ENCODE measurements at regions of chr12 and their contacts with region 1.

Region 1: GRCh38 chr12:69157023-69157655 is 82.2 kb upstream of the CPSF6 start:
- DNase-seq: peak; percentile 92 to 95
- ATAC-seq: peak; percentile 89
- H3K4me3 ChIP-seq: no peak overlapping the region
- H3K27ac ChIP-seq: no peak overlapping the region
- H3K4me1 ChIP-seq: no peaks in the 10 kb centered on the region
- H3K27me3 ChIP-seq: no peaks in the 10 kb centered on the region

Region 2: GRCh38 chr12:68981516-68981915 is 175.6 kb before region 1 on chr12:
- intact Hi-C with region 1: no loop called
- DNase-seq: no peak
- ATAC-seq: no peak
- H3K4me3 ChIP-seq: no peak overlapping the region
- H3K27ac ChIP-seq: no peak overlapping the region
- H3K4me1 ChIP-seq: no peaks in the 10 kb centered on the region
- H3K27me3 ChIP-seq: no peaks in the 10 kb centered on the region

Region 3: DNA sequence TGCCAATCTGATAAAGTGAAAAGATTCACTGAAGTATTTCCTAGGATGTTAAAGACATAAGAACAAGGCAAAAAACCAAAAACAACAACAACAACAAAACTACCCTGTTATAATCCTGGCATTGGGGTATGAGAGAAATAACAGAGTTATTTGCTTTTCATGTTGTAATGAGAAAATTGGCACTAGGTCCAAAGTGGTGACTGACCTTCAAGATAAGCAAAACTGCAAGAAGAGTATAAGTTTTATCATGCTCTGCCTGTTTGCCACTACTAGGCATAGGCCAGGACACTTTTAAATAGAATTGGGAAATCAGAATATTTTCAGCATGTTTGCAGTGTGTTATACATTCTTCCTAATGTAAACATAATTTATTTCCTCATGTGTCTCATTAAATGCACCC is 84.1 kb before region 1 on chr12:
- intact Hi-C with region 1: no loop called
- DNase-seq: no peak
- ATAC-seq: no peak
- H3K4me3 ChIP-seq: no peak overlapping the region
- H3K27ac ChIP-seq: no peak overlapping the region
- H3K4me1 ChIP-seq: no peaks in the 10 kb centered on the region
- H3K27me3 ChIP-seq: no peaks in the 10 kb centered on the region

Region 4: GRCh38 chr12:69211160-69211559 is 54.0 kb after region 1 on chr12:
- intact Hi-C with region 1: no loop called
- DNase-seq: no peak
- ATAC-seq: no peak
- H3K4me3 ChIP-seq: no peak overlapping the region
- H3K27ac ChIP-seq: no peak overlapping the region
- H3K4me1 ChIP-seq: no peaks in the 10 kb centered on the region
- H3K27me3 ChIP-seq: no peaks in the 10 kb centered on the region

Region 5: DNA sequence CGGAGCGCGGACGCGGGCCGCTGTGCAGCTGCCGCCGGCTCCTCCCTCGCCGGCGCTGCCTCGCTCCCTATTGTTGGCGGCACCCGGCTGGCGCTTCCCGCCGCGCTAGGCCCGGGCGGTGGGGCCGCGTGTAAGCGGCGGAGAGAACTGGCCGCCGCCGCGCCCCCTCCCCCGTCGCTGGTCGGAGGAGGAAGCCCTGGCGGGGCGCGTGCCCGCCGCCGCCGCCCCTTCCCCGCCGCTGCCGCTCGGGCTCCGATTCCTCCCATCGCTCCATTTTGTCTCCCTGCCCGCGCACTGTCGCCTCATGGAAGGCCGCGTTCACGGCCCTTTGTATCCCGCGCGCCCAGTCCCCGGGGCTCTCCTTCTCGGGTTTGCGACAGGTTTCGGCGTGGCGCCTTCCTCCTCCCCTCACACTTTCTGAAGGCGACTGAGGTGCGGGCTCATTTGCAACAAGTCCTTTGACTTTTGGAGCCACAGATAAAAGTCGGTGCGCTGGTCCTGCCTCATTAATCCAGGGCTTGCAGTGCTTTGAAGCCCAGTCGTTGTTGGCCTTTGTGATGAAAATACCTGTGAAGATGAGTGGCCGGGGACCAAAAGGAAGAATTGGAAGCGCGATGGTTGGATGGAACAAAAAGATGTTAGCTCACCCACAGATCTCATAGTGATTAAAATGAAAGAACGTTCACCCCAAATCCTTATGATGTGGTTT is 82.9 kb after region 1 on chr12:
- intact Hi-C with region 1: loop called in 1 of 2 experiments (anchors 5 kb)
- DNase-seq: peak; percentile 71 to 82
- ATAC-seq: peak; percentile 49
- H3K4me3 ChIP-seq: peak overlapping the region; percentile 86 to 99
- H3K27ac ChIP-seq: peak overlapping the region; percentile 88 to 91
- H3K4me1 ChIP-seq: peaks cover 0 to 4% of the 10 kb centered on the region in 2 donors
- H3K27me3 ChIP-seq: no peaks in the 10 kb centered on the region

Region 6: DNA sequence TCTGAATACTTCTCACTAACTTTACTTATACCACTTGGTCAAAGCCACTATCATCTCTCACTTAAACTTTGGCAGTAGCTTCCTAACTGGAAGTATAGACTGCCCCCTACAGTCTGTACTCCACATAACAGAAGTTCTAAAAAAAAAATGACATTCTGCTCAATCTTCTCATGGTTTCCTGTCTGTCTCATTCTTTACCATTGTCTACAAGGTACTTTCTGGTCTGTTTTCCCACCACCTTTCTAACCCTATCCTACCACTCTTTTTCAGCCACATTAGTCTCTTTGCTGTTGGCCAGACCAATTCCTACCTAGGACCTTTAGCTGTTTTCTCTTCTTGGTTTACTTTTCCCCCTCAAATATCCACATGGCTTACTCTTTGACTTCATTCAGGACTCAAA is 96.9 kb after region 1 on chr12:
- intact Hi-C with region 1: loop called (anchors 2 to 5 kb)
- DNase-seq: no peak
- ATAC-seq: peak; percentile 71
- H3K4me3 ChIP-seq: no peak overlapping the region
- H3K27ac ChIP-seq: no peak overlapping the region
- H3K4me1 ChIP-seq: no peaks in the 10 kb centered on the region
- H3K27me3 ChIP-seq: no peaks in the 10 kb centered on the region